CD4-positive, alpha-beta T cell (primary cell): ENCODE measurements at regions of chr9 and their contacts with region 1.

Region 1: DNA sequence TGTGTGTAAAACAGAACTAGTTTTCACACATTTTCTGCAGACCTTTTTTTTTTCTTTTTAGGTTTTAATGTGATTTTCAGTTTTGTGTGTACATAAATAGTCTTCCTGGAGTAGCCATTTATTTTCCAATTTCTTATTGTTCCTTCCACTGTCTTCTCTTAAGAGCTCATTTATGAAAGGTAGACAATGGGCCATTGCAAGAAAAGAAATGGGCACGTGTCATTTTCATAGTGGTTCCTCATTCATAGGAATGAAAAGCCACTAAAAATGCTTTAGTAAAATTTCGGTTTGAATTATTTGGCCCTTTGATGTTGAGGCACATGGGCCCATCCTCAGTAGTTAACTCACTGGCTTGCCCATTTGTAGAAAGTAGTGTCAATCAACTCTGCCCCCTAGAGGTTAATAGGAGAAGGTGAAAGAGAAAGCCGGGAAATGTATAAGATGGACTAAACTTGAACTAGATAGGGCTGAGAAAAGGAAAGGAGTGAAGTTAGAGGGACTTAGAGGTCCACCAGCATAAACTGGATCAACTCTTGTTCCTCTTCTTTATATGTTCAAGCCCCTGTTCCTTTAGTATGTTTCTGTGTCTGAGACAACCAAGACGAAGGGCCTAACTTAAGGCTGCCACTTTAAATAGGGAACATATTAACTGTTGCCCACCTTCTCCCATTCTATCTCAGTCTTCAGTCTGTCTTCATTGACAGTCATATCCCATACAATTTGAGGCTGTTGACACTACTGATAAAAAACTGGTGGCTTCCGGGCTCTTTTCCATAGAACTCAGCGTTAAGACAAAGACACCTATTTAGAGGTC is 72.6 kb downstream of the SMARCA2 start:
- DNase-seq: peak in 4 of 14 experiments; percentile 4 to 74 (median 71)
- ATAC-seq: peak; percentile 96
- H3K4me3 ChIP-seq: no peak overlapping the region
- H3K4me3 Mint-ChIP-seq: no peak overlapping the region
- H3K27ac ChIP-seq: no peak overlapping the region
- H3K27ac Mint-ChIP-seq: no peak overlapping the region
- H3K4me1 ChIP-seq: no peaks in the 10 kb centered on the region
- H3K4me1 Mint-ChIP-seq: peaks cover 10% of the 10 kb centered on the region
- H3K27me3 ChIP-seq: no peaks in the 10 kb centered on the region
- H3K27me3 Mint-ChIP-seq: no peaks in the 10 kb centered on the region
- CTCF ChIP-seq: peak; percentile 93

Region 2: DNA sequence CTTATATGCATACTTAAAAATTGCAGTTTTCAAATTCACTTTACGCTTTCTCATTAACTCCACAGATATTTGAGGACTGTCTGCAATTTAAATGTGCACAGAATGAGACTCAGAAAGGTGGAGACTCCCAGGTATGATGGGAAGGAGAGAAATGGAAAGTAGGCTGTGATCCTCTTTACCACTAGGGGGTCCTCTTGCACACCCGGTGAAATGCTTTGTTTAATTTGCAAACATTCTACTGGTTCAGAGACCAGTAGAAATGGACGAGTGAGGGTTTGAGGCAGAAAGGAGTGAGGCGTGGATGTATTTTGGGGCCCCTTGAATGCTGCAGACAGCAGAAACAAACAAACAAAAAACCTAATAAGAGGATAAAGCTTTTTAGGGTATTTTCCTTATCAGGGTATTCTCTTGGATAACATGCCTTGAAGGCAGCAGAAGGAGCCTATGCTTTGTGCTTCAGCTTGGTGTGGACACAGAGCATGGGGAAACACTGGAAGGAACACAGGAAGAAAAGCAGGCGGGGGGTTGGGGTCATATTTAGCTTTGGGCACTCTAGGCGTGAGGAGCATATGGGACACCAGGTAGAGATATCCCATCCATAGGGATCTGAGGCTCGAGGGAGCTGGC is 627.5 kb before region 1 on chr9:
- CTCF ChIA-PET with region 1: no interaction called
- POLR2A ChIA-PET with region 1: no interaction called
- intact Hi-C with region 1: loop called in 1 of 2 experiments (anchors 1 kb)
- DNase-seq: peak in 2 of 14 experiments; percentile 9 to 16
- ATAC-seq: no peak
- H3K4me3 ChIP-seq: no peak overlapping the region
- H3K4me3 Mint-ChIP-seq: no peak overlapping the region
- H3K27ac ChIP-seq: no peak overlapping the region
- H3K27ac Mint-ChIP-seq: no peak overlapping the region
- H3K4me1 ChIP-seq: no peaks in the 10 kb centered on the region
- H3K4me1 Mint-ChIP-seq: no peaks in the 10 kb centered on the region
- H3K27me3 ChIP-seq: no peaks in the 10 kb centered on the region
- H3K27me3 Mint-ChIP-seq: peaks cover 5% of the 10 kb centered on the region
- CTCF ChIP-seq: no peak

Region 3: DNA sequence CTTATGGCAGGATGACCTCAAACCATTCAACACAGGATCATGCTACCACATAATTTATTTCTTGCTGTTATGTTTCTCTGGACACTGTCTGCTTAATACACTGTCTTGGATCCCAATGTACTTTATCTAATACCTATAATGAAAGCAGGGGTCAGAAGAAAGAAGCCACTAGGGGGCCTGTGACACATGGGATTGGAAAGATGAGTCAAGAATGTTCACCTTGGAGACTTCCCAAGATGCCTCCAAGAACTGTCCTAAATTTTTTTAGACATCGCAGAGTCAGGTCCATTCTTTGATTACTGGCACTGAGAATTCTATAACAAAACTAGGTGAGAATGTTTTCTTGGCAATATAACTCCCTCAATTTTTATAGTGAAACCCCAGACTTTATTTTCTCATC is 378.4 kb before region 1 on chr9:
- CTCF ChIA-PET with region 1: no interaction called
- POLR2A ChIA-PET with region 1: no interaction called
- intact Hi-C with region 1: loop called (anchors 5 kb)
- DNase-seq: peak in 4 of 14 experiments; percentile 4 to 27 (median 20)
- ATAC-seq: no peak
- H3K4me3 ChIP-seq: no peak overlapping the region
- H3K4me3 Mint-ChIP-seq: no peak overlapping the region
- H3K27ac ChIP-seq: no peak overlapping the region
- H3K27ac Mint-ChIP-seq: no peak overlapping the region
- H3K4me1 ChIP-seq: no peaks in the 10 kb centered on the region
- H3K4me1 Mint-ChIP-seq: no peaks in the 10 kb centered on the region
- H3K27me3 ChIP-seq: peaks cover 0 to 5% of the 10 kb centered on the region in 2 experiments
- H3K27me3 Mint-ChIP-seq: peaks cover 35% of the 10 kb centered on the region
- CTCF ChIP-seq: peak; percentile 30

Region 4: DNA sequence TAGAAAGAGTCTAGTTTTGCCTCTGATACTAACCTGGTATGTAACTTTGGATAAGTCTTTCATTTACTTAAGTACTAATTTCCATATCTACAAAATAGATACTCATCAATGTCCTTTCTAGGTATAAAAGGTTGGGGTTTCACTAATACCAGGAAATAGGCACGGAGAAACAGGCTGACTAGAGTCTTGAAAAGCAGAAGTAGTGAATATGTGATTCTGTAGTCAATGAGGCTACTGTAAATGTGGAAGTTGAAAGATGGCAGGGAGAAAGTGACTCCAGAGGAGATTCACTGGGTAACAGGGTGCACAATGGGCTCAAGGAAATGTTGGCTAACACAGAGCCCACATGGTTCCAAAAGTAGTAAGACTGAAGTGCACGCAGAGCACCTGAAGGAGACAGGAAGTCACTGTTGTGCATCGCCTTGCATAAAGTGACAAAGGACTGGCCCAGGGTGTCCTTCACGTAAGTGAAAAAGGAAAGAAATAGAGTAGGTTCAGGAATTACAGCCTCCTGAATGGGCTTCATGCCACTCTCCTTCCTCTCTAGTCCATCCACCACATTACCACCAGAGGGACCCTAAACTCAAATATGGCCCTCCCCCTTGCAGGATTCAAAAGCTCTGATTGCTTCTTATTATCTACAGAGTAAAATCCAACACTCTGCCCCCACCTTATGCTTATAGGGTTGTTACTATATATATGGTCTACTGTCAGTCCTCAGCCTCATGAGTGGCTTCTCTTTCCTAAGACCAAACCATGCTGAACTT is 360.5 kb before region 1 on chr9:
- CTCF ChIA-PET with region 1: interaction called, 3 read pairs
- POLR2A ChIA-PET with region 1: no interaction called
- intact Hi-C with region 1: loop called (anchors 2 to 5 kb)
- DNase-seq: peak in 4 of 14 experiments; percentile 5 to 39 (median 28)
- ATAC-seq: no peak
- H3K4me3 ChIP-seq: no peak overlapping the region
- H3K4me3 Mint-ChIP-seq: no peak overlapping the region
- H3K27ac ChIP-seq: no peak overlapping the region
- H3K27ac Mint-ChIP-seq: no peak overlapping the region
- H3K4me1 ChIP-seq: no peaks in the 10 kb centered on the region
- H3K4me1 Mint-ChIP-seq: no peaks in the 10 kb centered on the region
- H3K27me3 ChIP-seq: no peaks in the 10 kb centered on the region
- H3K27me3 Mint-ChIP-seq: peaks cover 32% of the 10 kb centered on the region
- CTCF ChIP-seq: no peak

Region 5: DNA sequence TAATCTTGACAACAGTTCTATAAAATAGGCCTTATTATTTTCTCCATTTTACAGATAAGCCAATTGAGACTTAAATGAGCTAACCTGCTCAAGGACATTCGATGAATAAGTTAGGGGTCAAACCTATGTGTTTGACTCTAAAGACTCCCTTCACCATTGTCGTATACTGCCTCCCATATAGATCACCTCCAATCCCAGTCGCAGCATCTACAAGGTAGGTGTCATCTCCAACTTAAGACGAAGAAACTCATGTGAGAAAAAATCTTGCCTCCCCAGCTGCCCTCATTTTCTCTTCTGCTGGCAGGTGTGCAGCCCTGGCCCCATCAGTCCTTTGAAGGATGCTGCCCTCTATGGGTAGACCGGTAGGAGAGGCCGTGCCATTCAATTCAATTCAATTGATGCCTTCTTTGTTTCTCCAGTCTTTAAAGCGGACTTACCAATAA is 147.8 kb before region 1 on chr9:
- CTCF ChIA-PET with region 1: no interaction called
- POLR2A ChIA-PET with region 1: no interaction called
- intact Hi-C with region 1: loop called (anchors 5 kb)
- DNase-seq: peak in 8 of 14 experiments; percentile 3 to 58 (median 27)
- ATAC-seq: peak; percentile 58
- H3K4me3 ChIP-seq: no peak overlapping the region
- H3K4me3 Mint-ChIP-seq: no peak overlapping the region
- H3K27ac ChIP-seq: no peak overlapping the region
- H3K27ac Mint-ChIP-seq: no peak overlapping the region
- H3K4me1 ChIP-seq: no peaks in the 10 kb centered on the region
- H3K4me1 Mint-ChIP-seq: no peaks in the 10 kb centered on the region
- H3K27me3 ChIP-seq: no peaks in the 10 kb centered on the region
- H3K27me3 Mint-ChIP-seq: no peaks in the 10 kb centered on the region
- CTCF ChIP-seq: peak; percentile 60

Region 6: DNA sequence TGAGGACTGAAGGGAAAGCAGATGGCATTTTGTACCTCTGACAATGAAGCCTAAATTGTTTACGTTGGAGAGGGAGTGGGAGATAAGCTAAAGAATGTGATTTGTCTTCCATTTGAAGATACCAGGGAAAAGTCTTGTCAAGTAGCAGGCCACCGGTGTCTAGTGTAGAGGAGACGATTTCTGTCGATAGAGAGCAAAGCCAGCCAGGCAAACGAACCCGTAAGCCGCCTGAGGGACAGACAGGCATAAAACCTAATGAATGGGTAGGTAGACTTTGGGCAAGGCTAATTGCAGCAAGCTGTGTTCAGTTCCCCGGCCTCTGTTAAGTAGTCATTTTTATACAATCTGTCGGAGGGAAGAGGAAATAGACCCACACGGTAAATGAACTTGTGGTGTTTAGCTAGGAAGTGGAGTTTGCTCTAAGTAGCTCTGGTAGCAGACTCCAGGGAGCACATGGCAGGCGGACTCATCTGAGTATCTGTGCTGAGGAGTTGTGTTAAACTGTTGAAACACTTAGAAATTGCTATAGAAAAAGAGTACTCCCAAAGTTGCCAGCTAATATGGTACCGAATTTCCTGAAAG is 43.7 kb before region 1 on chr9:
- CTCF ChIA-PET with region 1: no interaction called
- POLR2A ChIA-PET with region 1: no interaction called
- intact Hi-C with region 1: no loop called
- DNase-seq: no peak
- ATAC-seq: peak; percentile 21
- H3K4me3 ChIP-seq: no peak overlapping the region
- H3K4me3 Mint-ChIP-seq: peak overlapping the region; percentile 2
- H3K27ac ChIP-seq: no peak overlapping the region
- H3K27ac Mint-ChIP-seq: peak overlapping the region; percentile 77
- H3K4me1 ChIP-seq: peaks cover 9% of the 10 kb centered on the region
- H3K4me1 Mint-ChIP-seq: peaks cover 64% of the 10 kb centered on the region
- H3K27me3 ChIP-seq: no peaks in the 10 kb centered on the region
- H3K27me3 Mint-ChIP-seq: no peaks in the 10 kb centered on the region
- CTCF ChIP-seq: no peak

Region 7: DNA sequence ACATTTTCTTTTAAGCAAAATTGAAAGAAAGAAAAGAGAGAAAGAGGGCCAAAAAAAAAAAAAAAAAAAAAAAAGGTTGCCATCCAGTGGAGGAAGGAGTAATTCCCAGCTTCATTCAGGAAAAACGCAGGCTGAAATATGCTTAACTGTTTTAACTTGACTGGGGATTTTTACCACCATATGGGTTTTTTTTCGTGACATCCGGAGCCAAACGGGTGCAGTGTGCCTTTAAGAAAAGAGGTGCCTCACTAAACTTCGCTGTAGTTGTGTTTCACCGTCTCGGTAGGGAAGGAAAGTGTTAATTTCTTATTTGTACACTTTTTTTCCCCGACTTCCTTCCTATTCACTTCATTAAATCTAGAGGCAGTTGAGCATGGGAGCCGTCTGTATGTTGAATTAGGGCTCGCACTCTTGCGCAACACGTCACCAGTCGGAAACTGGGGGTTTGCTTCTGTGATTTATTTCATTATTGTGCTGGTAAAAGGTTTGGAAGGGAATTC is 70.5 kb after region 1 on chr9:
- CTCF ChIA-PET with region 1: no interaction called
- POLR2A ChIA-PET with region 1: no interaction called
- intact Hi-C with region 1: no loop called
- DNase-seq: peak in 12 of 14 experiments; percentile 6 to 80 (median 21)
- ATAC-seq: peak; percentile 85
- H3K4me3 ChIP-seq: peak overlapping the region; percentile 60
- H3K4me3 Mint-ChIP-seq: peak overlapping the region; percentile 86
- H3K27ac ChIP-seq: no peak overlapping the region
- H3K27ac Mint-ChIP-seq: peak overlapping the region; percentile 73
- H3K4me1 ChIP-seq: peaks cover 21% of the 10 kb centered on the region
- H3K4me1 Mint-ChIP-seq: peaks cover 72% of the 10 kb centered on the region
- H3K27me3 ChIP-seq: no peaks in the 10 kb centered on the region
- H3K27me3 Mint-ChIP-seq: no peaks in the 10 kb centered on the region
- CTCF ChIP-seq: no peak

Region 8: DNA sequence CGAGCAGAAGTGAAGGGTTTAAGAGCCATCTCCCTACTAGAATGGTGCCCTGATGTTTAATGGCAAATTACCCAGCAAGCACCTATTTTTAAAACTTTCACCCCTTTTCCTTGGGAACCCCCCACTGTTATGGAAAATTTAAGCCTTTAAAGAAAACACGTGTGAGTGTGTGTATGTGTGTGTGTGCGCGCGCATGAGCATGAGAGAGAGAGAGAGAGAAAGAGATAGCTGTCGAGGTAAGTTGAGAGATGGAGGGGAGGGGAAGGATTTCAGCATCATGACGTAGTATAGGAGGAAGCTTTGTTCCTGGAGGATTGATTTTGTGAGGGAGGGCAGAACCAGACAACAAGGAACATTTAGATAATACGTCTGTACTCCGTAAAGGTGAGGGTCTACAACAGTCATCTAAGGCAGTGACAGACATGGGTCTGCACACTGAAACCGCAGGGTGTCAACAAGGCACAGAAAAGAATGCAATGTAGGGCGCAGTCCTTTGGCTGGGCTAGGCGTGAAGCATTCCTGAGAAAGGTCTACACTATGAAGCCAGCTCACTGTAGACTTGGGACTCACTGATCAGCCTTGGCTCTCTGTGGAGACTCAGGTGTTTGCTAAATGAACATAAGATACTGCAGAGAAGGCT is 155.2 kb after region 1 on chr9:
- CTCF ChIA-PET with region 1: no interaction called
- POLR2A ChIA-PET with region 1: no interaction called
- intact Hi-C with region 1: no loop called
- DNase-seq: no peak
- ATAC-seq: no peak
- H3K4me3 ChIP-seq: peak overlapping the region; percentile 59
- H3K4me3 Mint-ChIP-seq: peak overlapping the region; percentile 26
- H3K27ac ChIP-seq: no peak overlapping the region
- H3K27ac Mint-ChIP-seq: no peak overlapping the region
- H3K4me1 ChIP-seq: peaks cover 15% of the 10 kb centered on the region
- H3K4me1 Mint-ChIP-seq: peaks cover 17% of the 10 kb centered on the region
- H3K27me3 ChIP-seq: no peaks in the 10 kb centered on the region
- H3K27me3 Mint-ChIP-seq: peaks cover 17% of the 10 kb centered on the region
- CTCF ChIP-seq: no peak